CD4-positive, alpha-beta T cell (primary cell): ENCODE measurements at regions of chr5 and their contacts with region 1.

Region 1: GRCh38 chr5:158174918-158175851 is 316.2 kb upstream of the CLINT1 start:
- DNase-seq: peak; percentile 3 to 70 (median 29)
- ATAC-seq: peak; percentile 52
- H3K4me3 ChIP-seq: no peak overlapping the region
- H3K4me3 Mint-ChIP-seq: no peak overlapping the region
- H3K27ac ChIP-seq: no peak overlapping the region
- H3K27ac Mint-ChIP-seq: no peak overlapping the region
- H3K4me1 ChIP-seq: no peaks in the 10 kb centered on the region
- H3K4me1 Mint-ChIP-seq: no peaks in the 10 kb centered on the region
- H3K27me3 ChIP-seq: peaks cover 0 to 3% of the 10 kb centered on the region in 2 experiments
- H3K27me3 Mint-ChIP-seq: no peaks in the 10 kb centered on the region
- CTCF ChIP-seq: peak; percentile 55

Region 2: DNA sequence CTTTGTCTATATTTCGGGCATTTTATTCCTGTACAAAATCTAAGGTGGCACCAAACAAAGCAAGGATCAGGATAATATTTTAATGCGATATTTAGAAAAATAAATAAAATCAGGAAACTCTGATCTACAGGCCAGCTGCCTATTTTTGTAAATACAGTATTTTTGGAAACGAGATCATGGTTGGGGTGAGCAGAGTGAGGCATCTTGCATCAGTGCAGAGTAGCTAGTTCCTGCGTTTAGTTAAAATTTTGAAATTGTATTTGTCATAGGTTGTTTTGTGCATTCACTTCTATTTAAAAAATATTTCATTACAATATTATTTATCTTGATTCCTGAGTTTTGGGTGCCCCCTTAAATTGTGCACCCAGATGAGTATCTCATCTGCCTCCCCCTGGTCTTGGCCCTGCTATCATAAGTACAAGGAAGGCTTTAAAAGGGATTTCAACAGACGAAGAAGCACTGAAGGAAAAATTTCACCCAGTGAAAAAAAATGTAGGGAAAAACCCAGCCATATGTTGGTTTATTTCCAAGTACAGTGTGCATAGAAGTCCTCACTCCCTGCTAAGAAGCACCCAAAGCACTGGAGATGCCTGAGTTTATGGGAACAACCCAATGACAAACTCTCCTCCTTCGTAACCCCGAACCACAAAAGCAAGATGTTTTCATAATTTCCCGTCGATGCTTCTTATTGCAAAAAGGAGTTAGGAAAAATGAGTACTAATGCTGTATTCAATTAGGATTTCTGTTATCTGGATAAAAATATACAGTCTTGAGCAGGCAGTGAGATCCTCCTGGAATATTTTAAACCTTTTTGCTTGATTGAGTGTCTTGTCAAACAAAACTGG is 11.5 kb before region 1 on chr5:
- CTCF ChIA-PET with region 1: no interaction called
- POLR2A ChIA-PET with region 1: no interaction called
- intact Hi-C with region 1: no loop called
- DNase-seq: no peak
- ATAC-seq: no peak
- H3K4me3 ChIP-seq: no peak overlapping the region
- H3K4me3 Mint-ChIP-seq: no peak overlapping the region
- H3K27ac ChIP-seq: no peak overlapping the region
- H3K27ac Mint-ChIP-seq: no peak overlapping the region
- H3K4me1 ChIP-seq: no peaks in the 10 kb centered on the region
- H3K4me1 Mint-ChIP-seq: no peaks in the 10 kb centered on the region
- H3K27me3 ChIP-seq: peaks cover 3 to 4% of the 10 kb centered on the region in 2 experiments
- H3K27me3 Mint-ChIP-seq: peaks cover 21% of the 10 kb centered on the region
- CTCF ChIP-seq: no peak

Region 3: GRCh38 chr5:158320178-158320674 is 145.0 kb after region 1 on chr5:
- CTCF ChIA-PET with region 1: no interaction called
- POLR2A ChIA-PET with region 1: no interaction called
- intact Hi-C with region 1: no loop called
- DNase-seq: no peak
- ATAC-seq: no peak
- H3K4me3 ChIP-seq: no peak overlapping the region
- H3K4me3 Mint-ChIP-seq: no peak overlapping the region
- H3K27ac ChIP-seq: no peak overlapping the region
- H3K27ac Mint-ChIP-seq: no peak overlapping the region
- H3K4me1 ChIP-seq: no peaks in the 10 kb centered on the region
- H3K4me1 Mint-ChIP-seq: no peaks in the 10 kb centered on the region
- H3K27me3 ChIP-seq: no peaks in the 10 kb centered on the region
- H3K27me3 Mint-ChIP-seq: no peaks in the 10 kb centered on the region
- CTCF ChIP-seq: no peak

Region 4: GRCh38 chr5:158695595-158696330 is 520.6 kb after region 1 on chr5:
- CTCF ChIA-PET with region 1: no interaction called
- POLR2A ChIA-PET with region 1: interaction called, 3 read pairs
- intact Hi-C with region 1: loop called in 1 of 2 experiments (anchors 5 kb)
- DNase-seq: peak; percentile 27 to 80 (median 60)
- ATAC-seq: peak; percentile 80
- H3K4me3 ChIP-seq: no peak overlapping the region
- H3K4me3 Mint-ChIP-seq: no peak overlapping the region
- H3K27ac ChIP-seq: no peak overlapping the region
- H3K27ac Mint-ChIP-seq: no peak overlapping the region
- H3K4me1 ChIP-seq: no peaks in the 10 kb centered on the region
- H3K4me1 Mint-ChIP-seq: peaks cover 3% of the 10 kb centered on the region
- H3K27me3 ChIP-seq: no peaks in the 10 kb centered on the region
- H3K27me3 Mint-ChIP-seq: no peaks in the 10 kb centered on the region
- CTCF ChIP-seq: peak; percentile 99